GM10248 (cell line): ENCODE measurements at regions of chr20 and their contacts with region 1.

Region 1: DNA sequence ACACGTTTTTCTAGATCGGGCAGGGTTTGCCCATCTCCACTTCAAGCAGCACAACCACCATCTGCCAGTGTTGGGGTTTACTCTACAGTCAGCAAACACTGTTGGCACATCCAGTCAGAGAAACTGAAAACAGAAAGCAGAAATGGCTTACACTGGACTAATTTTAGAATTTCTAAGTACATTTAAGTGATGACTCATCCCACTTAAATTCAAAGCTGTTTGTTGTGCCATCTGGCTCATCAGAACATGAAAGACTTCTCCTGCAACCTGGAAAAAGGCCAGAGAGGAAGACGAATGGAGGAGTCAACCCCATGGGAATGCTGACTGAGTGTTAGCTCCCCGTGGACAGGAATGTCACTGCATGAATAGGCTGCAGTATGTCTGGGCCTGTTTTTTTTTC is 21.8 kb downstream of the FAM209B start:
- DNase-seq: peak; percentile 56
- CTCF ChIP-seq: no peak

Region 2: DNA sequence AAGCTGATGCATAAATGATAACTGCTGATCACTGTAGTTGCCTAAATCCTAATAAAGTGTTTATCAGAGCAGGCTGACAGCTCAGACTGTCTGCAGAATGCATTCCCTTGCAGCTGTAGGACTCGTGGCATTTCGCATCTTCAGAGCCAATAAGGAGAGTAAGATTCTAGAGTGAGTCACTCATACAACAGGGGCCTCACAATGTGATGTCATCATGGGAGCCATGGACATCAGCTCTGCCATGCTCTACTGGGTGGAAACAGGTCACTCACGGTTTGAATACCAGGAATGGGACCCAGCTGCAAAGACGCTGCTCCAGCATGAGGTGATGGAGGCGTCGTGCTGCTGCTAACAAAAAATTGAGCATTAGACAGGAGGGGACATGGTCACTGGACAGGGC is 14.4 kb before region 1 on chr20:
- CTCF ChIA-PET with region 1: interaction called, 22 read pairs
- POLR2A ChIA-PET with region 1: no interaction called
- DNase-seq: no peak
- CTCF ChIP-seq: no peak

Region 3: DNA sequence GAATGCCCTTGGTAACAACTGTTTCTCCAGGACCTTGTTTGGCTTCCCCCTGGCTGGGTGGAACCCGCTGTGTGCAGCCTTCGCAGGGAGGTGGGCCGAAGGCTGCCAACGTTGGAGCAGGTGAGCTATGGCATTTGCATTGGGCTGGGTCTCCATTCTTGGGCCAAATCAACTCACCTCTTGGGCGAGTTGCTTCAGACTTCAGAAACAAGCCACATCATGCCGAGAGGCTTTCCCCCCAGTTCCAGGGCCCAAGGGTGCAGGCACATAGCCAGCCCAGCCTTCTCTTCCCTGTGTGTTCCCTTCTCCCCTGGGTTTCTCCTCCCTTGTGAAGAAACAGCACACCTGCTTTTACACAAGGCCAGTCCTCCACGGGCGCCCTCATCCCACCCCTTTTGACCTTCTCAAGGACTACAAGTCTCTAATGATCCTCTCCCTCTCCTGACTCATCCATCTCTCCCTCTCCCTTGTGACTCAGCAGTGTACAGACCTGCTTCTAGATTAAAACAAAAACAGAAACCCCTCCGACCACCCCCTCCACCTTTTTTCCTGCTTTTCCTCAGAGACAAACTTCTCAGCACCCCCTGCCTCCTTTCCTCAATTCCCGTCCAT is 19.8 kb after region 1 on chr20:
- CTCF ChIA-PET with region 1: interaction called, 16 read pairs
- POLR2A ChIA-PET with region 1: no interaction called
- DNase-seq: no peak
- CTCF ChIP-seq: no peak

Region 4: GRCh38 chr20:56995576-56996075 is 440.8 kb after region 1 on chr20:
- CTCF ChIA-PET with region 1: interaction called, 19 read pairs
- POLR2A ChIA-PET with region 1: no interaction called
- DNase-seq: peak; percentile 49
- CTCF ChIP-seq: peak; percentile 33

Region 5: DNA sequence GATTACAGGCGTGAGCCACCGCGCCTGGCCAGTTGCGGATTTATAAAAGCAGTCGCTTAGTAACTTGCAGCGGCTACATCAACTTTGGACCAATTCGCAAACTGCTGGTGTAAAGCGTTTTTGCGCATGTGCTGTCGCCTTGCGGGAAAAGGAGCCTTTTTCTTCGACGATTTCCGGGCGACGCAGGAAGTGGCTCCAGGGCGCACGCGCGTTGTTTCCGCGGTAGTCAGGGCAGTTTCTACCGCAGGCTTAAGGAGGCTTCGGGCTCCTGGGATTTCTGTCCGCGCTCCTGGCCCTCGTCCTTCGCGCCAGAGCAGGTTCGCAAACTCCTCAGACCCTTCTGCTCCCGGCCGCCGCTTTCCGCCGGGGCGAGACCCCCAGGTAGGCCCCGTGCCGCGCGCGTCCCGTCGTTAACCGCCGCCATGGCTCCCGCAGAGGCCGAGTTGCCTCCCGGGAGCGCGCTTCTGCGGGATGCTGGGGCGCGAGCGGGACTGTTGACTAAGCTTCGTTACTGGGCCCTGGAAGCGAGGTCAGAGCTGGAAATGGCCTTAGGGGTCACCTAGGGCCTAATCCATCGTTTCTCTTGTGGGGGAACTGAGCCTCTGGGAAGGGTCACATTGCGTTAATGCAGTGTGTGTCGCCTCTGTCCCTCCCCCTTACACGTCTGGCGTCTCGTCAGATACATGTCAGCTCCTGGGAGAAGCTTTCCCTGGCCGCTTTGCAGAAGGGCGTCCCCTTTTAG is 796.3 kb after region 1 on chr20 and contains the start of gene RAE1:
- CTCF ChIA-PET with region 1: interaction called, 10 read pairs
- POLR2A ChIA-PET with region 1: no interaction called
- DNase-seq: peak; percentile 90
- CTCF ChIP-seq: no peak